GM18951 (cell line): ENCODE measurements at regions of chr4 and their contacts with region 1.

Region 1: GRCh38 chr4:183261953-183262775 is 57.9 kb downstream of the CLDN22 start:
- POLR2A ChIP-seq: no peak

Region 2: DNA sequence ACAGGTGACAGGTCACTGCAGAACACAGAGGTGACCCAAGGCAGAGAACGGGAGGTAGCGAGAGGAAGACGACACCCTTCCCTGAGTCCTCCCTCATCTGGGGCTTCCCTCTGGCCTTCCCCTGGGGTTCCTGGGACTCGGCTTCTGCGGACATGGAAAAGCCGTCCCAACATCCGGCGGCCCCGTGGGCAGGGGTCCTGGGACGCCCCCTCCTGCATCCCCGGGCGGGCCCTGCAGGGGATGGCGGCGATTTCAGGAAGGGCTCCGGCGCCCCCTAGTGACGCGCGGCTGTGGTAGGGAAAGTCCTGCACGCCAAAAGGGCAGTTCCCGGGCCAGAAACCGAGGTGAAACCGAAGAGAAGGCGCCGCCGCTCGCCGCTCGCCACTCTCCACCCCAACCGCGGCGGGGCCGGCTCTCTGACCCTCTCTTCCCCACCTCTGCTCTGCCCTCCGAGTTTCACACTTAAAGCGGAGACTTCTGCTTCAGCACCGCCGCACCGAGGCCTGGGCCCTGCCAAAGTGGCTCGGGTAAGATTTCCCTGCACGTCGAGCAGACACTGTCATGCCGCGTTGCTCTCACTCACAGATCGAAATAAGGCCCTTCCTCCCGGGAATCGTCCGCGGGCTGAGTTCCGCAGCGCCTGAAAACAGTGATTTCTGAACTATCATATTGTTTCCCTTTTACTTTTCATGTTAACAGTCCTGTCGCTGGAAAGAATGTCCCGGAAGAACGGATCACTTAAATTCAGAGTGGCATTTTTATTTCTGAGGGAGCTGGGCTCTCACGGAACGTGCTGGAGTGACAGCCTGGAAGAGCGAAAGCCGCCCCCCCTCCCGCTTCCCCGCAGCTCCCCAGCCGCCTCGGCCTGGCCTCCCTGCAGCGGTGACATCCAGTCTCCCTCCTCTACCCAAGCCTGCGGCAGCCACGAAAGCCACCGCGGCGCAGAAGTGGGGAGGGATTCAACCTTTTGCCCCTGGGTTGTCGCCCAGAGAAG is 455.6 kb before region 1 on chr4:
- in situ Hi-C with region 1: loop called (anchors 25 kb)
- POLR2A ChIP-seq: no peak